Mucosa of descending colon (tissue), 3 donors: ENCODE measurements at regions of chr3 and their contacts with region 1.

Region 1: DNA sequence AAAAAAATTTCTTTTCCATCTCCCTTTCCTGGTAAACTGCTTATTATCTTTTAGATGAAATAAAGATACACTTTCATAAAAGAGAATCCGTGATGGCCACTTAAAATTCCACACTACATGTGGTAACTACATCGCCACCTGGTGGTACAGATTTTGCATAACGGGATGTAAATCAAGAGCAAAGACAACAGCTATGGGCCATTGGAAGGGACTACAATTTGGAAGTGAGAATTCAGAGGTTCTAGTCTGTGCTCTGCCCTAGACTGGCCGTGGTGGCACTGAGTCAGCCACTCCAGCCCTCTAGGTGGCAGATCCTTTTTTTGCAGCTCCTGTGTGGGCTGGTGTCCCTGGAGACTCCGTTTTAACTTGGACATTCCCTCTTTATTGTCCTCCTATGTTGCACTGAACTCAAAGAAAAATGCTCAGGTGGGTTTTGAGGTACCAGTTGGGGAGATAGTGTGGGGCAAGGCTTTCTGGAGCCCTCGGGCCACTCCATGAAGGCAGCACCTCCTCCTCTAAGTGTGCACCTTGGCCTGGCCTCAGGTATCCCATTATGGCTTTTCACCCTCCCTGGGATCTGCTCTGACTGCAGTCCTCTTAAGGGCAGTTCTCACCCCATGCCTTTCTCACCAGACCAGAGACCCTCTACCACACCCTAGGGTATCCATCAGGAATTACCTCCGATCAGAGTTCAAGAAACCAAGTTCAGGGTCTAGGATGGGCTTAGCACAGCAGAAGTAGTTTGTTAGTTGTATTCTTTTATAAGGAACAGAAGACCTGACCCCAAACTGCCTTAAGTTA is 54.9 kb downstream of the SPSB4 start:
- DNase-seq: peak in 1 of 3 donors; percentile 94
- ATAC-seq: peak; percentile 65
- H3K4me3 ChIP-seq: no peak overlapping the region
- H3K4me1 ChIP-seq: no peaks in the 10 kb centered on the region
- CTCF ChIP-seq: peak; percentile 52

Region 2: GRCh38 chr3:140898340-140899180 is 207.5 kb before region 1 on chr3:
- intact Hi-C with region 1: loop called (anchors 5 to 10 kb)
- DNase-seq: peak in 1 of 3 donors; percentile 45
- ATAC-seq: peak; percentile 81
- H3K4me3 ChIP-seq: no peak overlapping the region
- H3K4me1 ChIP-seq: no peaks in the 10 kb centered on the region
- CTCF ChIP-seq: peak; percentile 19

Region 3: GRCh38 chr3:140922634-140923033 is 183.4 kb before region 1 on chr3:
- intact Hi-C with region 1: loop called in 1 of 2 experiments (anchors 10 kb)
- DNase-seq: no peak
- ATAC-seq: peak; percentile 20
- H3K4me3 ChIP-seq: no peak overlapping the region
- H3K4me1 ChIP-seq: no peaks in the 10 kb centered on the region
- CTCF ChIP-seq: no peak

Region 4: DNA sequence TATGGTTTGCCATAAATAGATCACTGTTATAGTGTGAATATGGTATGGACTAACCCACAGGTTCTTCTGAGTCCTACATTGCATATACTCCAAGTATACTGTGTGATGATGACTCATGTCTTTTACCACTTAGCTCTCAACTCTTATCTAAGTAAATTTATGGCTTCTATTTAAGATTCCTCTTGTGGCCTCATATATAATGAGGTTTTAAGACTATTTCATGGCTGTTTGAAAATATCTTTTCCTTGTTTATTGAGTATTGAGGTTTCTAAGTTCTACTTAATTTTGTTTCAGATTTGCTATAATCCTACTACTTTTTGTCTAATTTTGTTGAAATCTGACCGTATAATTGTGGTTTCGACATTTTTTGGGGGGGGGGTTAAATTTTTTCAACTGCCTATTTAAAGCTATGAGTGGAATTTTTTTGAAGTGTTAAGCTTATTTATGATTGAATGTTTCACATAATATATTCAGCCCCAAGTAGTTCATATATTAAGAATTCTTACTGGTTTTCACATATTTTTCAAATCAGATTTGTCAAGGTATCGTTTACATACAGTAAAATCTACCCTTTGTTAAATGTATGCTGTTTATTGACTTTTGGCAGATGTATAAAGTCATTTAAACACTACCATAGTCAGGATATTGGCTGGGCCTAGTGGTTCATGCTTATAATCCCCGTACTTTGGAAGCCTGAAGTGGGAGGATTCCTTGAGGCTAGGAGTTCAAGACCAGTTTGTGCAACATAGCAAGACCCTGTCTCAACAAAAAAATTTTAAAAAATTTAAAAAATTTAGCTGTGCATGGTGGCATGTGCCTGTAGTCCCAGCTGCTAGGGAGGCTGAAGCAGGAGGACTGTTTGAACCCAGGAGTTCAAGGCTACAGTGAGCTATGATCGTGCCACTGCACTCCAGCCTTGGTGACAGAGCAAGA is 152.7 kb before region 1 on chr3:
- intact Hi-C with region 1: no loop called
- DNase-seq: no peak
- ATAC-seq: peak; percentile 98
- H3K4me3 ChIP-seq: no peak overlapping the region
- H3K4me1 ChIP-seq: peaks cover 18% of the 10 kb centered on the region
- CTCF ChIP-seq: no peak

Region 5: DNA sequence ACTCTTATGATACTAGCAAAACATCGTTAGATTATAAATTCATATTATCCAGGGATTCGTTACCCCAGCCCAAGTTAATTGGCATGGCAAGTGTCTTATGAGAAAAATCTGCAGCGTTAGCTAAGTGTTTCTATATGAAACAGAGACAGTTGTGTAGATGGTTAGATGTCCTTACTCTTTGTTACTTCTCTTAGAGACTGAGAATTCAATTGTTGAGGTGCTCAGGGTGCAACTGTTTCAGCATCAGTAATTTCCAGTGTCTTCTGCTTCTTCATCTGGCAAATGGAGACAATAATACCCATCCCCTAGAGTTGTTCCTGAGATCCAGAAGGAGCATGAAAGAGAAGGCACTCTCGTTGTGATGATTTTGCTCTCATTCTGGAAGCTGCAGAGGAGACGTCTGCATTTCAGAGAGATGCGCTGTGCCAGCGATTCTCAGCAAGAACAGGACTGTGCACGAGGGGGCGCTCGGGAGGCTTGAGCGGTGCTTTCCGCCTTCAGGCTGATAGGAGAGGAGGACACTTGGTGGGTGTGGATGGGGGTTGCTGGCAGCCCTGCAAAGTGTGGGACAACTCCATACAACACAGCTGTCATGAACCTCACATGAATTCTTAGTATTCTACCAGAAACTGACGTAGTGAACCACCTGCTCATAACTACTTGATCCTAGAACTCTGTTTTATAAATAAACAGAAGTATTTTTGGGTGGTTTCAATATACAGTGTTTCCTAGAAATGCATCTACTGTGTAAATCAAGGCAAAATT is 94.6 kb before region 1 on chr3:
- intact Hi-C with region 1: loop called in 1 of 2 experiments (anchors 5 kb)
- DNase-seq: peak; percentile 62 to 78 (median 75)
- ATAC-seq: peak; percentile 70
- H3K4me3 ChIP-seq: no peak overlapping the region
- H3K4me1 ChIP-seq: no peaks in the 10 kb centered on the region
- CTCF ChIP-seq: peak; percentile 37